Posterior cingulate gyrus (tissue), 11 donors: ENCODE measurements at regions of chr3 and their contacts with region 1.

Region 1: GRCh38 chr3:134212906-134213665 is 37.6 kb downstream of the RYK start:
- DNase-seq: peak; percentile 62 to 98 (median 90)

Region 2: DNA sequence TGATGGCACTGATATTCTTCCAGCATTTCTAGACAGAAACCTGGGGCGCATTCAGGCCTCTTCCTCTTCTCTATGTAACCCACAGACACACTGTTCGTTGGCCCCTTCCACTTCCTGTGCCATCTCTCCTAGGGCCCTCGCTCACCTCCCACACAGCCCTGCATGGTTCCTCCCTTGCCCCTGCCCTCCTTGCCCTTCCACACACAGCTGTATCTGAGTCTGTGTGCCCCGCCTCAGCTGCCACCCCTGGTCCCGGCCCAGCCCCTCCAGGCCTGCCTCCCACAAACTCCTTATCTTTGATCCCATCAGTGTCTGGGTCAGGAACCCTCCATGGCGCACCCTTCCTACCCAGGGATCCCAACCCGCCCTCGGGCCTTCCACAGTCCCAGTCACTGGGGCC is 355.3 kb before region 1 on chr3:
- intact Hi-C with region 1: no loop called
- DNase-seq: peak in 1 of 10 donors; percentile 53

Region 3: GRCh38 chr3:133927540-133928066 is 285.5 kb before region 1 on chr3:
- intact Hi-C with region 1: loop called (anchors 5 kb)
- DNase-seq: peak in 7 of 10 donors; percentile 34 to 93 (median 47)

Region 4: GRCh38 chr3:134299185-134299887 is 86.2 kb after region 1 on chr3:
- intact Hi-C with region 1: loop called (anchors 1 kb)
- DNase-seq: no peak